Activated CD8-positive, alpha-beta T cell treated with anti-CD3 and anti-CD28 coated beads, Interleukin-2, amount 10 ng/mL, durations not matched to agents 7 days and 5 days (primary cell): ENCODE measurements at regions of chr11 and their contacts with region 1.

Region 1: GRCh38 chr11:74255741-74256369 is 55.6 kb downstream of the P4HA3 start:
- DNase-seq: peak; percentile 68
- ATAC-seq: peak; percentile 69
- H3K4me3 Mint-ChIP-seq: no peak overlapping the region
- H3K27ac Mint-ChIP-seq: no peak overlapping the region
- H3K4me1 Mint-ChIP-seq: peaks cover 2% of the 10 kb centered on the region
- H3K27me3 Mint-ChIP-seq: no peaks in the 10 kb centered on the region

Region 2: GRCh38 chr11:74085542-74085892 is 170.3 kb before region 1 on chr11:
- CTCF ChIA-PET with region 1: no interaction called
- POLR2A ChIA-PET with region 1: no interaction called
- DNase-seq: no peak
- ATAC-seq: no peak
- H3K4me3 Mint-ChIP-seq: no peak overlapping the region
- H3K27ac Mint-ChIP-seq: peak overlapping the region; percentile 6
- H3K4me1 Mint-ChIP-seq: peaks cover 5% of the 10 kb centered on the region
- H3K27me3 Mint-ChIP-seq: no peaks in the 10 kb centered on the region

Region 3: GRCh38 chr11:74237541-74237940 is 18.3 kb before region 1 on chr11:
- CTCF ChIA-PET with region 1: interaction called, 16 read pairs
- POLR2A ChIA-PET with region 1: no interaction called
- DNase-seq: no peak
- ATAC-seq: no peak
- H3K4me3 Mint-ChIP-seq: no peak overlapping the region
- H3K27ac Mint-ChIP-seq: no peak overlapping the region
- H3K4me1 Mint-ChIP-seq: peaks cover 4% of the 10 kb centered on the region
- H3K27me3 Mint-ChIP-seq: no peaks in the 10 kb centered on the region

Region 4: GRCh38 chr11:74269161-74269811 is 13.4 kb after region 1 on chr11:
- CTCF ChIA-PET with region 1: interaction called, 26 read pairs
- POLR2A ChIA-PET with region 1: no interaction called
- DNase-seq: peak; percentile 52
- ATAC-seq: peak; percentile 79
- H3K4me3 Mint-ChIP-seq: no peak overlapping the region
- H3K27ac Mint-ChIP-seq: no peak overlapping the region
- H3K4me1 Mint-ChIP-seq: peaks cover 20% of the 10 kb centered on the region
- H3K27me3 Mint-ChIP-seq: peaks cover 29% of the 10 kb centered on the region

Region 5: GRCh38 chr11:74321487-74322188 is 65.8 kb after region 1 on chr11:
- CTCF ChIA-PET with region 1: interaction called, 52 read pairs
- POLR2A ChIA-PET with region 1: no interaction called
- DNase-seq: peak; percentile 25
- ATAC-seq: no peak
- H3K4me3 Mint-ChIP-seq: no peak overlapping the region
- H3K27ac Mint-ChIP-seq: no peak overlapping the region
- H3K4me1 Mint-ChIP-seq: no peaks in the 10 kb centered on the region
- H3K27me3 Mint-ChIP-seq: peaks cover 22% of the 10 kb centered on the region

Region 6: GRCh38 chr11:74388678-74389327 is 132.9 kb after region 1 on chr11:
- CTCF ChIA-PET with region 1: interaction called, 23 read pairs
- POLR2A ChIA-PET with region 1: no interaction called
- DNase-seq: peak; percentile 78
- ATAC-seq: peak; percentile 80
- H3K4me3 Mint-ChIP-seq: no peak overlapping the region
- H3K27ac Mint-ChIP-seq: no peak overlapping the region
- H3K4me1 Mint-ChIP-seq: peaks cover 8% of the 10 kb centered on the region
- H3K27me3 Mint-ChIP-seq: no peaks in the 10 kb centered on the region

Region 7: GRCh38 chr11:74570266-74571061 is 314.6 kb after region 1 on chr11:
- CTCF ChIA-PET with region 1: interaction called, 10 read pairs
- POLR2A ChIA-PET with region 1: no interaction called
- DNase-seq: peak; percentile 28
- ATAC-seq: no peak
- H3K4me3 Mint-ChIP-seq: no peak overlapping the region
- H3K27ac Mint-ChIP-seq: no peak overlapping the region
- H3K4me1 Mint-ChIP-seq: no peaks in the 10 kb centered on the region
- H3K27me3 Mint-ChIP-seq: peaks cover 2% of the 10 kb centered on the region